ENCODE measurements at regions of chr2 and their contacts with region 1.

Region 1: DNA sequence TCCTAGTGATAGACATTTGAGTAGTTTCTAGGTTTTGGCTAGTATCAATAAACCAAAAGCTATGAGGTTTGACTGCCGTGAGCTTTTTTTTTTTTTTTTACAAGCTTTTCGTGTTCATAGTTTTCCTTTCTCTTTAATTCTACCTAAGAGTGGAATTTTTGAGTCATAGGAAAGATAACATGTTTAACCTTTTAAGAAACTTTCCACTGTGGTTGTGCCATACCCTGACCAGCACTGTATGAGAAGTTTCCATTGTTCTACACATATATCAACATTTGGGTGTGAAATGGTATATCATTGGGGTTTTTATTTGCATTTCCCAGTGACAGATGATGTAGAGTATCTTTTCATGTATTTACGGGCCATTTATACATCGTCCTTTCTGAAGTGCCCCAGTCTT is 31.7 kb downstream of the UBE2F start:
- DNase-seq: no peak
- H3K4me3 ChIP-seq: no peak overlapping the region
- H3K27ac ChIP-seq: no peak overlapping the region
- H3K4me1 ChIP-seq: no peaks in the 10 kb centered on the region
- H3K27me3 ChIP-seq: no peaks in the 10 kb centered on the region
- CTCF ChIP-seq: no peak

Region 2: DNA sequence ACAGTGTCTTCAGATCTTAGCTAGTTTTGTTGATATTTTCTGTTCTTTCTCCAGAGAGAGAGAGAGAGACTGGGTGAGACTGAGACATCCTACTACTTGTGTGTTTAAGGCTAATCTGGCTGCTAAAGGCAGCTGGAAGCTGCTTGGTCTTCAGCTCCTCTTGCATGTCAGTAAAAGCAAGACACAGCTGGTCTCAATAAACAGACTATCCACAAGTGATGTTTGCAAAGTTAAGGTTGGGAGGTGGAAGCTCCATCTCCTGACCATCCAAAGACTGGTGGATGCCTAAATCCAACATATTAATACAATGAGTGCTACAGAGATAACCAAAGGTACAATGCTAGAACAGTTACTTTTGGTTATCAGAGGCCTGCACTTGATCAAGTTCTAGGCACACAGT is 178.1 kb after region 1 on chr2:
- CTCF ChIA-PET with region 1: no interaction called
- POLR2A ChIA-PET with region 1: interaction called, 25 read pairs
- intact Hi-C with region 1: no loop called
- DNase-seq: no peak
- H3K4me3 ChIP-seq: no peak overlapping the region
- H3K27ac ChIP-seq: no peak overlapping the region
- H3K4me1 ChIP-seq: no peaks in the 10 kb centered on the region
- H3K27me3 ChIP-seq: no peaks in the 10 kb centered on the region
- CTCF ChIP-seq: no peak

Measured in A673 (cell line).